Aorta (tissue), 5 donors: ENCODE measurements at regions of chr4 and their contacts with region 1.

Region 1: DNA sequence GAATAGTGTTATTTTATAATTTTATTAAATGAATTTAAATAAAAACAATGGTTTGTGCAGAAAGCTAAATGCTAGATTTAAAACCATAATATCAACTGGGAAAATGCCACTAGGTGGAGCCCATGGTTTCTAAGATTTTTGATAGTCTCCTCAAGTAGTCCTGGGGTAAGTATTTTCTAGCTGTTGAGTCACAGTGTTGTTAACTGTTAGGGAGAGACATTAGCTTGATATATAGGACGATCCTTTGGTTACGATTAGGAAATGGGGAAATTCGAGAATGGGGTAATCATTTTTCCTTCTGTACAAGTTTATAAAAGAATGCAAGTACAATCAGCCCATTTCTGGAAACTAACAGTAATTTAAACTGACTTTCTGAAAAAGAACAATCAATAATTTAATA is 378.4 kb downstream of the ANKRD50 start:
- DNase-seq: no peak
- ATAC-seq: peak; percentile 79
- H3K4me3 ChIP-seq: no peak overlapping the region
- H3K27ac ChIP-seq: no peak overlapping the region
- H3K4me1 ChIP-seq: no peaks in the 10 kb centered on the region
- H3K27me3 ChIP-seq: no peaks in the 10 kb centered on the region

Region 2: GRCh38 chr4:124243671-124244366 is 90.3 kb before region 1 on chr4:
- intact Hi-C with region 1: no loop called
- DNase-seq: no peak
- ATAC-seq: no peak
- H3K4me3 ChIP-seq: no peak overlapping the region
- H3K27ac ChIP-seq: no peak overlapping the region
- H3K4me1 ChIP-seq: no peaks in the 10 kb centered on the region
- H3K27me3 ChIP-seq: no peaks in the 10 kb centered on the region

Region 3: DNA sequence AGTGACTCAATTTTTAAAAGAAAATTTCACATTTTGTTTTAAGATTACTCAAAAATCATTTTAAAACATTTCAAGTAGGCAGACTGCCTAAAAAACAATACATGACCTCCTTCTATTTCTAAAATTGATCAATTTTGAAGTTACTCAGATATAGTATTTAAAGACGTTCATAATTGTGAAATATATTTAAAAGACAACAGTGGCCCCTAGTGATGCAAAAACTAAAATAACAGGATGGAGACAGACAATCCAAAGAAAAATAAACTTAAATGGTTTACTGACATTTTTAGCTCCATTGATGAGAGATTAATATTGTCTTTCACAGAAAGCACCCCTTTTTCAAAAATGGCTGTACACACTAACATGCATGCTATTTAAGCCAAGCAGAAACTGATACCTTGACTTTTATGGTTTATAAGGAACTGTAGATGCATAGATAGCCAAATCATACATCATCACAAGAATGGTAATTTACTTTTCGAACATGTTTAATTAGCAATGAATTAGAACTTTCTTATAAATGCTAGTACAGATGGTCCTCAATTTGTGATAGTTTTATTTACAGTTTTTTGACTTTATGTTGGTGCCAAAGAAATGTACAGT is 910.8 kb after region 1 on chr4:
- intact Hi-C with region 1: loop called (anchors 2 kb)
- DNase-seq: no peak
- ATAC-seq: no peak
- H3K4me3 ChIP-seq: no peak overlapping the region
- H3K27ac ChIP-seq: no peak overlapping the region
- H3K4me1 ChIP-seq: no peaks in the 10 kb centered on the region
- H3K27me3 ChIP-seq: no peaks in the 10 kb centered on the region

Region 4: DNA sequence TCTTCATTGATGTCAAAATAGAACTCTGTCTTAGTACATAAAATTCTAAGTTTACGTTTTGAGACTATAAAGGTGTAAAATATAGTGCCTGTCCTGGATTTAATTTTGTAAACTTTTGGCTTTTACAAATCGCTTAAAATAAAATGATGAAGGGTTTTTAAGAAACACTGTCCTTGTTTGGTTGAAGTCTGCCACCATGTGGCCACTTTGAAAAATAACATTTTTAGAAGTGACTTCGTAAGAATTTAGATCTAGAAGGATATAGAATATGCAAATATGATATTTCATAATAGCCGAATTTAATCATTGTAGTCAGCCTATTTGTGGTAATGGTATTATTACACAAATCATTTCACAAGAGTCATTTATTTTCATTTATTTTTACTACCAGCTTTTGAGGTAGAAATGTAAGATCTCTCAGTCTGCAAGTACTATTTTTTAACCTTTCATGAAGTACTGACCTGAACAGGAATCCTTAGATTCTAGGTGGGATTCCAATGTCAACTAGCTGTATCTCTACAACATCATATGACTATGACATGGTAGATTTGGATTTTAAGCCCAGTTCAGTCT is 949.7 kb after region 1 on chr4:
- intact Hi-C with region 1: loop called (anchors 1 to 5 kb)
- DNase-seq: no peak
- ATAC-seq: no peak
- H3K4me3 ChIP-seq: no peak overlapping the region
- H3K27ac ChIP-seq: no peak overlapping the region
- H3K4me1 ChIP-seq: no peaks in the 10 kb centered on the region
- H3K27me3 ChIP-seq: no peaks in the 10 kb centered on the region